Activated CD4-positive, alpha-beta memory T cell treated with anti-CD3 and anti-CD28 coated beads for 36 hours (primary cell): ENCODE measurements at regions of chr22 and their contacts with region 1.

Region 1: GRCh38 chr22:50582562-50583293 is at the start of gene CHKB:
- DNase-seq: peak; percentile 99
- H3K4me3 Mint-ChIP-seq: peak within 1 kb of the TSS; percentile 94
- H3K27ac Mint-ChIP-seq: peak within 1 kb of the TSS; percentile 87
- H3K4me1 Mint-ChIP-seq: peaks cover 21% of the 10 kb centered on the region
- H3K27me3 Mint-ChIP-seq: no peaks in the 10 kb centered on the region
- total RNA-seq, gene CHKB: 76.2 to 76.3 TPM

Region 2: DNA sequence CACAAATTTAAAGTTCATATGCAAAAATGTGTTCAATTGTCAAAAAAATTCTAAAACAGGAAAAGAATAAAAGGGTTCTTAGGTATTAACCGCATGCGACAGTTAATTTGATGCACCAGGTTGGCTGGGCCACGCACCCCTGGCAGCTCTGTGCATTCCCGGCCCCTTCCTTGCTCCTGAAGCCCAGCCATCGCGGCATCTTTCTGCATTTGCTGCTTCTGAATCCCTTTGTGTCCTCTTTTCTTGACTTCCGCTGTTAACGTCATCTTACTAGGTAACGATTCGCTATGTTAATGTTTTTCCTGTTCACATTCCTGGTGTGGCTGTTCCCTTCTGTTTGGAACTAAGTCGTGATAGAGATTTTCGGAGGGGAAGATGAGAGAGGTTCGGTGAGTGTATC is 45.0 kb before region 1 on chr22:
- CTCF ChIA-PET with region 1: no interaction called
- POLR2A ChIA-PET with region 1: interaction called, 5 read pairs
- intact Hi-C with region 1: loop called (anchors 2 kb)
- DNase-seq: no peak
- H3K4me3 Mint-ChIP-seq: no peak overlapping the region
- H3K27ac Mint-ChIP-seq: peak overlapping the region; percentile 100
- H3K4me1 Mint-ChIP-seq: peaks cover 81% of the 10 kb centered on the region
- H3K27me3 Mint-ChIP-seq: no peaks in the 10 kb centered on the region

Region 3: GRCh38 chr22:50627642-50628542 is 45.2 kb after region 1 on chr22 and contains the start of gene ARSA:
- CTCF ChIA-PET with region 1: no interaction called
- POLR2A ChIA-PET with region 1: no interaction called
- intact Hi-C with region 1: no loop called
- DNase-seq: peak; percentile 85
- H3K4me3 Mint-ChIP-seq: peak within 1 kb of the TSS; percentile 88
- H3K27ac Mint-ChIP-seq: peak within 1 kb of the TSS; percentile 69
- H3K4me1 Mint-ChIP-seq: peaks cover 21% of the 10 kb centered on the region
- H3K27me3 Mint-ChIP-seq: no peaks in the 10 kb centered on the region
- total RNA-seq, gene ARSA: 23.9 to 25.8 TPM